Activated T-helper 1 cell treated with anti-CD3 and anti-CD28 coated beads, Interleukin-12 subunit alpha, Interleukin-12 subunit beta, Interleukin-2, Interleukin-4 antibody, amounts not matched to agents 30 ng/mL and 10 ng/mL and 1 ng/mL, durations not matched to agents 14 hours and 24 hours and 36 hours (primary cell): ENCODE measurements at regions of chr19 and their contacts with region 1.

Region 1: GRCh38 chr19:52007806-52008557 is at the start of gene ZNF615:
- DNase-seq: peak; percentile 80
- H3K4me3 Mint-ChIP-seq: peak within 1 kb of the TSS; percentile 94
- H3K27ac Mint-ChIP-seq: peak within 1 kb of the TSS; percentile 94
- H3K4me1 Mint-ChIP-seq: peaks cover 20% of the 10 kb centered on the region
- H3K27me3 Mint-ChIP-seq: no peaks in the 10 kb centered on the region
- total RNA-seq, gene ZNF615: 6.4 and 6.9 TPM in 2 replicates

Region 2: GRCh38 chr19:51904331-51905165 is 103.4 kb before region 1 on chr19 and contains the start of gene ZNF649:
- intact Hi-C with region 1: loop called (anchors 1 kb)
- DNase-seq: peak; percentile 70
- H3K4me3 Mint-ChIP-seq: peak within 1 kb of the TSS; percentile 98
- H3K27ac Mint-ChIP-seq: peak within 1 kb of the TSS; percentile 99
- H3K4me1 Mint-ChIP-seq: peaks cover 21% of the 10 kb centered on the region
- H3K27me3 Mint-ChIP-seq: peaks cover 3% of the 10 kb centered on the region
- total RNA-seq, gene ZNF649: 10.5 and 12.3 TPM in 2 replicates

Region 3: GRCh38 chr19:51986309-51987291 is 21.4 kb before region 1 on chr19 and contains the start of gene ZNF350:
- intact Hi-C with region 1: loop called (anchors 1 kb)
- DNase-seq: peak; percentile 83
- H3K4me3 Mint-ChIP-seq: peak within 1 kb of the TSS; percentile 94
- H3K27ac Mint-ChIP-seq: peak within 1 kb of the TSS; percentile 88
- H3K4me1 Mint-ChIP-seq: peaks cover 12% of the 10 kb centered on the region
- H3K27me3 Mint-ChIP-seq: no peaks in the 10 kb centered on the region
- total RNA-seq, gene ZNF350: 7.9 and 8.7 TPM in 2 replicates

Region 4: GRCh38 chr19:52176366-52176970 is 168.5 kb after region 1 on chr19:
- intact Hi-C with region 1: no loop called
- DNase-seq: no peak
- H3K4me3 Mint-ChIP-seq: no peak overlapping the region
- H3K27ac Mint-ChIP-seq: no peak overlapping the region
- H3K4me1 Mint-ChIP-seq: no peaks in the 10 kb centered on the region
- H3K27me3 Mint-ChIP-seq: no peaks in the 10 kb centered on the region